ENCODE measurements at regions of chr19 and their contacts with region 1.

Region 1: DNA sequence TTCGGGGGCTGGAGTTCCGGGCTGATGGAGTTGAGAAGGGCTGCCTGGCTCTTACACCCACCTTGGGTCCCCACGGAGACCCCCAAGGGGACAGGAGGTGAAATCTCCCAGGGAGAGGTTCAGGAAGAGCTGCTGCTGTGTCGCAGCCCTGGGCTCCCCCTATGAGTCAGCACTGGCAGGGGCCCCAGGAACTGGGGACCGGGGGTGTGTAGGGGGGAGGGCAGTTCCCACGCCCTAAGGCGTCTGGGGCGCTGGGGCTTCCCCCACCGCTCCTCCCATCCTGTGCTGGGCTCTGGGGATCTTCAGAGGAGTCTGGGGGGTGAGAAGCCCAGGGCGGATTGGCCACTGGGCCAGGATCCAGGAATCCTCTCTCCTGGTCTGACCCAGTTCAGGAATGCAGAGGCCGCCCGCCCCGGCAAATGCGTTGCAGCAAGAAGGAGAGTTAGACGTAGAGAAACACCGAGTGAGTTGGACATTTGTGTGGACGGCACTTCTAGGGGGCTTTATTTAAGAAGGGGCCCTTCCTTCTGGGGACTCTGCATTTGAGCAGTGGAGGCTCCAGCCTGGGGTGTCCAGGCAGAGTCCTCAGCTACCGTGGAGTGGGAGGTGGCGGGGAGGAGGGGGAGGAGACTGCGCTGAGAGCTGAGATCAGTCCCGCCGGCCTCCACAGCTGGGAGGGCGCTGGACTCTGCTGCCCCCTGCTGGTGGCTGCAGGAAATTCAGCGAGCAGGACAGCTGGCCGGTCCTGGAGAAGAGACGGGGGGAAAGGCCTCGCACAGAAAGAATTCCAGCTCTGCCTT is 15.0 kb upstream of the NANOS3 start:
- DNase-seq: peak; percentile 94
- ATAC-seq: peak; percentile 92
- H3K4me3 Mint-ChIP-seq: peak overlapping the region; percentile 91
- H3K27ac Mint-ChIP-seq: peak overlapping the region; percentile 92
- H3K4me1 Mint-ChIP-seq: peaks cover 42% of the 10 kb centered on the region
- H3K27me3 Mint-ChIP-seq: peaks cover 20% of the 10 kb centered on the region

Region 2: DNA sequence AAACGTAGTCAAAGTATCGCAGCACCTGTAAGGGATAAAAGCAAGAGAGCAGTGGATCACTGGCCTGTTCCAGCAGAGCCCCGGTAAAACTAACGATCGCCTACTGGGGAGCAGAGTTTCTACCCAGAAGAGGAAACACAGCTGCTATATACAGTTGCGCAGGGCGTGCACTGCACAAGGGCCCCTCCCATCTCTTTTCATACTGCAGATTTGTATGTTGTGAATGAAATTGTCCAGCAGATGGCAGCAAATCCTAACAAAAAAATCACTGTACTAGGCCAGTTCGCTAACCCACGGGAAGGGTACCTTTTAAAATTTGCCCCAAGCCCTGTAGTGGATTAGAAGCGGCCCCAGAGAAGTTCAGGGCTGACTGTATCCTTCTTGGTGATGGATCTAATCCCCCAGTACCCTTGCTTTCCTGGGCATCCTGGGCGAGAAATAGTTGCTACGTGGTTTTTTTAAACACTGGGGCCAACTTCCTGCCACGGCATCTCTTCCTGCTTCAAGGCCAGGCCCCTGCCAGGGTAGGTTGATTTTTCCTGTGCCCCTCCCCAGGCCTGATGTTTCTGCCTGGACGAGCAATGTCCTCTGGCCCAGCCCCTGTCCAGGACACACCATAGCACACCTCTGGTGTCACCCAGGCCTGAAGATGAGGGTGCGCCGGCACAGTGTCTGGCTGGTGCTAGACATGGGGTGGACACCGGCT is 584.7 kb before region 1 on chr19:
- CTCF ChIA-PET with region 1: interaction called, 12 read pairs
- DNase-seq: peak; percentile 78
- ATAC-seq: peak; percentile 90
- H3K4me3 Mint-ChIP-seq: peak overlapping the region; percentile 40
- H3K27ac Mint-ChIP-seq: peak overlapping the region; percentile 88
- H3K4me1 Mint-ChIP-seq: peaks cover 31% of the 10 kb centered on the region
- H3K27me3 Mint-ChIP-seq: no peaks in the 10 kb centered on the region

Region 3: GRCh38 chr19:13748169-13748828 is 113.6 kb before region 1 on chr19:
- CTCF ChIA-PET with region 1: interaction called, 17 read pairs
- DNase-seq: no peak
- ATAC-seq: no peak
- H3K4me3 Mint-ChIP-seq: peak overlapping the region; percentile 93
- H3K27ac Mint-ChIP-seq: peak overlapping the region; percentile 90
- H3K4me1 Mint-ChIP-seq: peaks cover 28% of the 10 kb centered on the region
- H3K27me3 Mint-ChIP-seq: no peaks in the 10 kb centered on the region

Region 4: GRCh38 chr19:13784731-13785452 is 77.0 kb before region 1 on chr19:
- CTCF ChIA-PET with region 1: interaction called, 244 read pairs
- DNase-seq: peak; percentile 85
- ATAC-seq: peak; percentile 77
- H3K4me3 Mint-ChIP-seq: peak overlapping the region; percentile 33
- H3K27ac Mint-ChIP-seq: peak overlapping the region; percentile 68
- H3K4me1 Mint-ChIP-seq: peaks cover 36% of the 10 kb centered on the region
- H3K27me3 Mint-ChIP-seq: no peaks in the 10 kb centered on the region

Region 5: DNA sequence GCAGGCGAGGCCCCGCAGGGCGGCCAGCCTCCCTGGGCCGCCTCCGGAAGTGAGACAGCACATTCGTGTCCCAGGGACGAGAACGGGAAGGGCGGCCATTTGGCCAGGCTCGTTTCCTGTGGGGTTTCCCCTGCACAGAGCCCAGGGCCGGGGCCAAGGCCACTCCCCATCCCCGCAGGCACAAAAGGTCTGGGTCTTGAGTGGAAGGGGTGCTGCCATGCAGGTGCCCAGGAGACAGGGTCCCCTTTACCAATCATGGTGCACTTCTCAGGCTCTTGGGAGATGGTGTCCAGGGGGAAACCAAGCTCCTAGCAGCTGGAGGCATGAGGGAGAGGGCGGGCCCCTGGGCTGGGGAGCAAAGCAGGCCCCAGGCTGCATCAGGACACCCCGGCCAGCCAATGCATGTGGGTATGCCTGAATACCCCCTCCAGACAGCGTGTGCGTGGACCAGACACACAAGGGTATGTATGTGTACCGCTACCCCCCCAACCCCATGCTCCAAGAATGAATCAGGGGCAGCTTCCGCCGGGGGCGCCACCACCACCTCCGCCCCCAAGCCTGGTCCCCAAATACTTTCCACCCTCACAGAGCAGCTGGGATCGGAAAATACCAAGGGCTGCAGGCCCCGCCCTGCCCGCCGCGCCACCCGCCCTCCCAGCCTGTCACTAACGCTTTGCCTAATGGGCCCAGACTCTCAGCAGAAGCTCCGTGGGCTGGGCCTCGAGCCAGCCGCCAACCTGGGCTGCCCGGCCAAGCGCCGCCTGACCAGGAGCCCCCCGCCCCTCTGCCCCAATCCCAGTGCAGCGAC is 22.6 kb before region 1 on chr19:
- CTCF ChIA-PET with region 1: interaction called, 50 read pairs
- DNase-seq: peak; percentile 94
- ATAC-seq: peak; percentile 37
- H3K4me3 Mint-ChIP-seq: peak overlapping the region; percentile 90
- H3K27ac Mint-ChIP-seq: peak overlapping the region; percentile 95
- H3K4me1 Mint-ChIP-seq: peaks cover 45% of the 10 kb centered on the region
- H3K27me3 Mint-ChIP-seq: no peaks in the 10 kb centered on the region

Region 6: DNA sequence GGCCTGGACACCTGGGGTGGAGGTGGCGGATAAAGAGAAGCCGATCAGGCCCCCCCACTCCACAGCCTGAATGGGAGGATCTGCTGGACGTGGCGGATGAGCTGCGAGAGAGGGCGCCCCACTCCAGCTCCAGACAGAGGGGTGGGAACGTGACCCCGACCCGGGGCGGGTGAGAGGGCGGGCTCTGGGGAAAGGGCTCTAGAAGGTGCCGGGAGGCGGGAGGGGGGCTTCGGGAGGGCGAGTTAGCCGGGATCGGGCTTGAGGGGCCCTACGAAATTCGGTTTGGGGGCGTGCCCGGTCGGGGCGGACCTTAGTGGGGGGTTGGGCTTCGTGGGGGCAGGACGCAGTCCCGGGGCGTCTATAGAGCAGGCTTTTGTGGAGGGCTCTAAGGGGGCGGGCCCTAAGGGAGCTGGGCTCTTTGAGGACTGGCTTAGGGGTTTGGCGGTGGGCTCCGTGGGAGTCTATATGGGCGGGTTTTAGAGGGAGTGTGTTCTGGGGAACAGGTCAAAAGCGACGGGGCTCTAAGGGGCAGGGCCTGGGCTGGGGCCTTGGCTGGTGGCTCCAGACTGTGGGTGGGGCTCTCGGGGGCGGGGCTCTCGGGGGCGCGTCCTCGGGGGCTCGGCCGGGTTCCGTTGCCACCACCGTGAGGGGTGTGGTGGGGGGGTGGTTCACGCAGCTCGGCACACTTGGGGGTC is 10.9 kb after region 1 on chr19:
- CTCF ChIA-PET with region 1: interaction called, 18 read pairs
- DNase-seq: peak; percentile 61
- ATAC-seq: peak; percentile 84
- H3K4me3 Mint-ChIP-seq: peak overlapping the region; percentile 48
- H3K27ac Mint-ChIP-seq: no peak overlapping the region
- H3K4me1 Mint-ChIP-seq: peaks cover 2% of the 10 kb centered on the region
- H3K27me3 Mint-ChIP-seq: peaks cover 4% of the 10 kb centered on the region

Region 7: DNA sequence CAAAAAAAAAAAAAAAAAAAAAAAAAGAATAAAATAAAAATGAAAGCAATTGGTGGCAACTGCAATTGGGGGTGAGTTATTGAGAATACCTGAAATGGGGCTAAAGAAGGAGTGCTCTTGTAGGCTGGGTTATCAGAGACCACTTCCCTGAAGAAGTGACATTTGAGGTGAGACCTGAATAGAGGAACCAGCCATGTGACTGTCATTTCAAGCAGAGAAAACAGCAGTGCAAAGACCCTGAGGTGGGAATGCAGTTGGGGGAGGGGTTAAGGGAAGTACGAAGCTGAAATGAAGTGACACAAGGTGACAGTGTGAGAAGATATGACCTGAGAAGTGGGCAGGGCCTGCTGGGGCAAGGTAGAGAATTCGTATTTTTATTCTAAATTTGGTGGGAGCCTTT is 204.2 kb after region 1 on chr19:
- CTCF ChIA-PET with region 1: no interaction called
- DNase-seq: no peak
- ATAC-seq: no peak
- H3K4me3 Mint-ChIP-seq: no peak overlapping the region
- H3K27ac Mint-ChIP-seq: no peak overlapping the region
- H3K4me1 Mint-ChIP-seq: peaks cover 2% of the 10 kb centered on the region
- H3K27me3 Mint-ChIP-seq: peaks cover 6% of the 10 kb centered on the region

Measured in activated CD8-positive, alpha-beta memory T cell treated with anti-CD3 and anti-CD28 coated beads, Interleukin-2, amount 10 ng/mL, durations not matched to agents 7 days and 5 days (primary cell).